Activated CD4-positive, alpha-beta memory T cell treated with anti-CD3 and anti-CD28 coated beads for 36 hours (primary cell): ENCODE measurements at regions of chr9 and their contacts with region 1.

Region 1: GRCh38 chr9:128688512-128689292 is at the start of gene SET:
- DNase-seq: peak; percentile 95
- H3K4me3 Mint-ChIP-seq: peak within 1 kb of the TSS; percentile 81
- H3K27ac Mint-ChIP-seq: peak within 1 kb of the TSS; percentile 95
- H3K4me1 Mint-ChIP-seq: peaks cover 54% of the 10 kb centered on the region
- H3K27me3 Mint-ChIP-seq: no peaks in the 10 kb centered on the region
- total RNA-seq, gene SET: 578 to 592 TPM

Region 2: GRCh38 chr9:128656416-128657343 is 32.0 kb before region 1 on chr9 and contains the start of gene DYNC2I2:
- CTCF ChIA-PET with region 1: no interaction called
- POLR2A ChIA-PET with region 1: interaction called, 3 read pairs
- intact Hi-C with region 1: loop called (anchors 1 kb)
- DNase-seq: peak; percentile 97
- H3K4me3 Mint-ChIP-seq: peak within 1 kb of the TSS; percentile 83
- H3K27ac Mint-ChIP-seq: peak within 1 kb of the TSS; percentile 99
- H3K4me1 Mint-ChIP-seq: peaks cover 7% of the 10 kb centered on the region
- H3K27me3 Mint-ChIP-seq: no peaks in the 10 kb centered on the region
- total RNA-seq, gene DYNC2I2: 44.9 to 45.2 TPM

Region 3: GRCh38 chr9:128702445-128702948 is 13.8 kb after region 1 on chr9 and contains the start of gene PKN3:
- CTCF ChIA-PET with region 1: interaction called, 20 read pairs
- POLR2A ChIA-PET with region 1: interaction called, 9 read pairs
- intact Hi-C with region 1: loop called (anchors 1 kb)
- DNase-seq: peak; percentile 91
- H3K4me3 Mint-ChIP-seq: peak within 1 kb of the TSS; percentile 73
- H3K27ac Mint-ChIP-seq: peak within 1 kb of the TSS; percentile 50
- H3K4me1 Mint-ChIP-seq: peaks cover 12% of the 10 kb centered on the region
- H3K27me3 Mint-ChIP-seq: no peaks in the 10 kb centered on the region
- total RNA-seq, gene PKN3: 10.4 to 11.4 TPM

Region 4: DNA sequence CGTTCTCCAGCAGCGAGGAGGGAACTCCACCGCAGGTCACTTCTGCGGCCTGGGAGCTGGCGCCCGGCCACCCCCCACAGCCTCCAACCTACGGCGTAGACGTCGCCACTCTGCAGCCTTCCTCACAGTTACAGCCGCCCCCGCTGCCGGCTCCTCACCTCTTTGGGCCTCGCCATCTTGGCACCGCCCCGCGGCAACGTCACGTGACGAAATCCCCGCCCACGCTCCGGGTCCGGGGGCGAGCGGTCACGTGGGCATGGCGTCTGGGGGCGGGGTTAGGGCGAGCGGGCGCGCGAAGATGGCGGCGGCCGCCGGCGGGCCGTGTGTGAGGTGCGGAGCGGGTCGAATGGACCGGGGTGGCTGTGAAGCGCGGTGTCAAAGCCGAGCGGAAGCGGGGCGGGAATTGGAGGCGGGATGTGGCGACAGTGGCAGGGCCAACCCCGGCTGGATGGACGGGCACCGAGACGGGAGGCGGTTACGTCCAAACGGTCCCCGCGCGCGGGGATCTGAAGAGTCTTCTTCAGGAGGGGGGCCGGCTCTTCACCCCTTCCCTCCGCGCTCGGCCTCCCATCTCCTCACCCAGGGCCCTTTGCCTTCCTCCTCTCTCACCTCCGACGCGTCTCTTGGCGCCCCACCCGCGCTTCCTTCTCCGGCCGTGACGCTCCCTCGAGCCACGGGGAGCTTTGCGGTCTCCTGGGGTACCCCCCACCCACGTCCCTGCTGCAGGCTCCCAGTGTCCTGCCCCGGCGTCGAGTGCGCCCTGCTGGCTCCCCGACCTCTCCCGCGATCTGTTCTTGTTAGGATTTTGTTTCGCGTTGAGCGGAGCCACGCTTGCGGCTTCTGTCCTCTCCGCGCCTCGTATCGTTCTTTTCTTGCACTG is 259.0 kb after region 1 on chr9 and contains the starts of genes DOLK and NUP188:
- CTCF ChIA-PET with region 1: no interaction called
- POLR2A ChIA-PET with region 1: no interaction called
- intact Hi-C with region 1: loop called (anchors 5 kb)
- DNase-seq: peak; percentile 98
- H3K4me3 Mint-ChIP-seq: peak within 1 kb of the TSS; percentile 98
- H3K27ac Mint-ChIP-seq: peak within 1 kb of the TSS; percentile 98
- H3K4me1 Mint-ChIP-seq: peaks cover 27% of the 10 kb centered on the region
- H3K27me3 Mint-ChIP-seq: no peaks in the 10 kb centered on the region
- total RNA-seq, gene DOLK: 5.7 to 6.7 TPM
- total RNA-seq, gene NUP188: 121 to 124 TPM